ENCODE measurements at regions of chr6 and their contacts with region 1.

Region 1: GRCh38 chr6:40894962-40895799 is 143.8 kb downstream of the UNC5CL start:
- DNase-seq: peak; percentile 56 to 79 (median 74)
- H3K4me3 ChIP-seq: no peak overlapping the region
- H3K27ac ChIP-seq: peak overlapping the region in 1 of 5 donors; percentile 40
- H3K4me1 ChIP-seq: peaks cover 3 to 18% of the 10 kb centered on the region in 2 donors
- H3K27me3 ChIP-seq: no peaks in the 10 kb centered on the region
- CTCF ChIP-seq: peak; percentile 45 to 75 (median 71)
- POLR2A ChIP-seq: no peak

Region 2: GRCh38 chr6:40743226-40743625 is 152.0 kb before region 1 on chr6:
- intact Hi-C with region 1: no loop called
- DNase-seq: no peak
- H3K4me3 ChIP-seq: no peak overlapping the region
- H3K27ac ChIP-seq: no peak overlapping the region
- H3K4me1 ChIP-seq: no peaks in the 10 kb centered on the region
- H3K27me3 ChIP-seq: no peaks in the 10 kb centered on the region
- CTCF ChIP-seq: no peak
- POLR2A ChIP-seq: no peak

Region 3: GRCh38 chr6:41027799-41028628 is 132.8 kb after region 1 on chr6:
- intact Hi-C with region 1: loop called (anchors 2 to 5 kb)
- DNase-seq: peak; percentile 70 to 90 (median 86)
- H3K4me3 ChIP-seq: peak overlapping the region in 2 of 4 donors; percentile 20 to 48
- H3K27ac ChIP-seq: peak overlapping the region in 2 of 5 donors; percentile 51 to 52
- H3K4me1 ChIP-seq: peaks cover 6 to 15% of the 10 kb centered on the region in 2 donors
- H3K27me3 ChIP-seq: no peaks in the 10 kb centered on the region
- CTCF ChIP-seq: peak; percentile 94 to 100 (median 98)
- POLR2A ChIP-seq: peak in 1 of 2 donors; percentile 9

Measured in adrenal gland (tissue), 19 donors.